Mucosa of descending colon (tissue), 3 donors: ENCODE measurements at regions of chr4 and their contacts with region 1.

Region 1: DNA sequence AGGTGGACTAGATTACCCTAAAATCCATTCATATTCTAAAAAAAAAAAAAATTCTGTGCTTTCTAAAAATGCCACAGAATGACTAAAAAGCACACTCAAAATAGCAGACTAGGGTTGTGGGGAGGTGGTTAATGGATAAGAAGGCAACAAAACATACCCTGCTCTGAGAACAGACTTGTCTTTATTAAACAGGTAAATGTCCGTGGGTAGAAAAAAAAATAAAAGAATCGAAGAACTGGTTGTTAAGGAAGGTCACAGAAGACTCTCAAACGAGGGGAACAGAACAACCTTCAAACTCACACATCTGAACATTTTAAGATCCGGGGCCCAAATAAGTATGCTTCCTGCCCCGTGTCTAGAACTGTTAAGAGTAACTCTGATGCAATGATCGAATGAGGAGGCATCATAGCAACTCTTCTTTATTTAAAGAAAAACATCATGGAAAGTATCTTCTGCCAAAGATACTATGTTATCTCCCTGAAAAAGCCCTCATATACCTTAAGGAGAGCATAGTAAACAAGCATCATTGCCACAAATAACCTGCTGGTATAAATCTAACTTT is 68.4 kb downstream of the ELF2 start:
- DNase-seq: no peak
- ATAC-seq: no peak
- H3K4me3 ChIP-seq: no peak overlapping the region
- H3K4me1 ChIP-seq: no peaks in the 10 kb centered on the region
- CTCF ChIP-seq: no peak

Region 2: GRCh38 chr4:139167774-139168444 is 59.3 kb after region 1 on chr4:
- intact Hi-C with region 1: loop called in 1 of 2 experiments (anchors 10 kb)
- DNase-seq: no peak
- ATAC-seq: peak; percentile 52
- H3K4me3 ChIP-seq: no peak overlapping the region
- H3K4me1 ChIP-seq: no peaks in the 10 kb centered on the region
- CTCF ChIP-seq: no peak